ENCODE measurements at regions of chr20 and their contacts with region 1.

Region 1: GRCh38 chr20:49610701-49611538 is 43.0 kb upstream of the PTGIS start:
- DNase-seq: peak; percentile 88
- H3K4me3 Mint-ChIP-seq: peak overlapping the region; percentile 12
- H3K27ac Mint-ChIP-seq: peak overlapping the region; percentile 14
- H3K4me1 Mint-ChIP-seq: peaks cover 24% of the 10 kb centered on the region
- H3K27me3 Mint-ChIP-seq: peaks cover 8% of the 10 kb centered on the region

Region 2: GRCh38 chr20:49484180-49485140 is 126.5 kb before region 1 on chr20:
- CTCF ChIA-PET with region 1: interaction called, 10 read pairs
- POLR2A ChIA-PET with region 1: no interaction called
- intact Hi-C with region 1: no loop called
- DNase-seq: peak; percentile 80
- H3K4me3 Mint-ChIP-seq: peak overlapping the region; percentile 61
- H3K27ac Mint-ChIP-seq: no peak overlapping the region
- H3K4me1 Mint-ChIP-seq: peaks cover 4% of the 10 kb centered on the region
- H3K27me3 Mint-ChIP-seq: peaks cover 60% of the 10 kb centered on the region

Region 3: DNA sequence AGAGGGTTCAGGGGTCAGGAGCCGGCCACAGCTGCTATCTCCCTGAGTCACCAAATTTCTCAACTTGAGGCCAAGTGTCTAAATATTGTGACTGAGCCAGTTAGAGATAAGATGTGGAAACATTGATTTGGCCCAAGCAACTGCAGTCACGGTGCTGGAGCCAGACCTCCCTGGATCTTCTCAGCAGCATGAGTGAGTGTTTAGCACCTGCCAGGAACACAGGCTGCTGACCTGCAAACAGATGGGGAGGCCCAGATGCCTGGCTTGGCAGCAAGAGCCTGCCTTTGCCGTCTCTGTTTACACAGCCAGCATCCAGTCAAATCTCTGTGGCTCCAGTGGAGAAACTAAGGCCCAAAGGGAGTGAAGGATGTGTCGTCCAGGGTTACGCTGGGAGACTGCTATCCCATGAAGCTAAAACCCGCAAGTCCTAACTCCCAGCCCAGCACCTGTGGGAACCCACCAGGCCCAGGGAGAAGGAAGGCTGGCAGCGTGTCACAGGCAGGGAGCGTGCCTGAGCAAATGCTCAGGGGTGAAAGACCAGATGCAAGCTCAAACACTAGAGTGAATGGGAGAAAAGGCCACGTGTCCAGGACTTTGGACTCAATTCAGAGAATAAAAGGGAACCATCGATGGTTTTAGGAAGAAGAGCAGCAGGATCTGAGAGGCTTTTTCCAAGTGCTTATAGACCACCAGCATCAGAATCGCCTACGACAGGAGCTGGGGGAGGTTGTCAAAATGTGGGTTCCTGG is 27.1 kb before region 1 on chr20:
- CTCF ChIA-PET with region 1: interaction called, 28 read pairs
- POLR2A ChIA-PET with region 1: interaction called, 3 read pairs
- intact Hi-C with region 1: no loop called
- DNase-seq: no peak
- H3K4me3 Mint-ChIP-seq: no peak overlapping the region
- H3K27ac Mint-ChIP-seq: no peak overlapping the region
- H3K4me1 Mint-ChIP-seq: peaks cover 6% of the 10 kb centered on the region
- H3K27me3 Mint-ChIP-seq: peaks cover 3% of the 10 kb centered on the region

Region 4: GRCh38 chr20:49821870-49822331 is 211.0 kb after region 1 on chr20:
- CTCF ChIA-PET with region 1: interaction called, 6 read pairs
- POLR2A ChIA-PET with region 1: no interaction called
- intact Hi-C with region 1: loop called (anchors 5 kb)
- DNase-seq: no peak
- H3K4me3 Mint-ChIP-seq: no peak overlapping the region
- H3K27ac Mint-ChIP-seq: no peak overlapping the region
- H3K4me1 Mint-ChIP-seq: peaks cover 47% of the 10 kb centered on the region
- H3K27me3 Mint-ChIP-seq: no peaks in the 10 kb centered on the region

Region 5: DNA sequence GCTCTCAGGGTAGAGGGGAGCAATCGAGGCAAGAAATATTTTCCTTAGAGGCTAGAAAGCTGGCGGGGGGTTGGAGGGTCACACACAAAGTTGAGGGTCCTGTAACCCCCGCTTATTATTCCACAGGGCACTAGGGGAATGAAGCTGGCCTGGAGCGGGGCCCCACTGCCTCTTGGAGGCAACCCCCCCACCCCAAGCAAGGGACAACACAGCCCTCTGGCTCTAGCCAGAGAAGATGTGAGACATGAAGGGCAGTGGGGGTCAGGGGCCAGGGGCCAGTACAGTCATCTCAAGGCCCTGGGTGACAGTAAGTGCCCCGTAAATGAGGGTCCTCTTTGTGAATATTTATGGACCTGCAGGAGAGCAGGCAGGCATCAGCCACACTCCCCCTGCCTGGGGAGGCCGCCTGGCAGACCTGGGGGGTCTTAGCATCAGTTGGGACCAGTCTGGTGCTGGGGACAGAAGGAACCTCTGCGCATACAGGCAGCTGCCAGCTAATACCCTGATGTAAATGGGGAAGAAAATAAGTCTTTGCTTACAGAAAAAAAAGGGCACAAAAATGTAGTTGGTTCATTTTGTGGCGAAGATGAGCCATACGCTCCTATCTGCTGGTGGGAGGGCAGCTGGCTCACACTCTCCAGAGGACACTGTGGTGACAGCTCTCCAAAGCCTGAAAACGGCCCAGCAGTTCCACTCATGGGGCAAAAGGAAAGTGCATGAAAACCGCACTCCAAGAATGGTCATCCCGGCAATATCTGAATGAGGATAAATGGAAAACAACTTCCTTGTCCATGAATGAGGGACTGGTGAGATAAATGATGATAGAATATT is 282.5 kb after region 1 on chr20:
- CTCF ChIA-PET with region 1: interaction called, 77 read pairs
- POLR2A ChIA-PET with region 1: no interaction called
- intact Hi-C with region 1: loop called (anchors 2 kb)
- DNase-seq: peak; percentile 81
- H3K4me3 Mint-ChIP-seq: peak overlapping the region; percentile 6
- H3K27ac Mint-ChIP-seq: peak overlapping the region; percentile 87
- H3K4me1 Mint-ChIP-seq: peaks cover 32% of the 10 kb centered on the region
- H3K27me3 Mint-ChIP-seq: no peaks in the 10 kb centered on the region

Measured in activated CD4-positive, alpha-beta memory T cell treated with anti-CD3 and anti-CD28 coated beads for 36 hours (primary cell).